ENCODE measurements at regions of chr1 and their contacts with region 1.

Region 1: DNA sequence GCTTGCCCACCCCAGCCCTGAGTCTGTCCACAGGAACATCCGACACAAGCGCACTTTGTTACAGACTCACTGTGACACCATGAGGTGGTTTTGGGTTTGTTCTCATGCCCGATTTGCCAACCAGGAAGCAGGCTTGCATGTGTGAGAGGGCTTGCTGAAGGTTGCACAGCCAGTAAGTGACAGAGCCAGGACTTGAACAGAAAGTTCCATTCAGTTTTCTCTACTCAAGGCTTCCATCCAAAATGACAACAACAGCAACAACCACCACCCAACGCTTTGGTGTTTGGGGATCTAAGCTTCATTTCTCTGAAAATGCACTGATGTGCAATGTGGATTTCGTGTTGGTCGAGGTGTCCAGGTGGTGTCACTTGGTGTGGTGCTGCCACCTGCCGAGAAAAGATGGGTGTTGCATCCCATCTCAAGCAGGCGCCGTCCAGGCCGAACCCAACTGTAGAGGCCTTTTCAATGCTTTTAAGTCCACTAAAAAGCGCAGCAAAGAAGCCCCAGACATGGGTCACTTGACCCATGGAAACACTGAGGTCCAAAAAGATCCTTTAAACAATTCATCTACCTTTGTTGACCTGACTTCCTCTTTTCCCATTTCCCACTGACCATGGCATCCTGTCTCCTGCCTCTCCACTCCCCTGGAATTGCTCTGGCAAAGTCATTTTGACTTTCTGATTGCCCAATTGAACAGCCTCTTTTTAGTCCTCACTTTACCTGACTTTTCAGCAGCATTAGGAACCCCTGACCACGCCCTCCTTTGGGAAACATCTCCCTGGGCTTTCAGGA is 12.2 kb downstream of the CITED4 start:
- DNase-seq: peak; percentile 63 to 87 (median 77)
- ATAC-seq: peak; percentile 98
- H3K4me3 ChIP-seq: no peak overlapping the region
- H3K4me3 Mint-ChIP-seq: peak overlapping the region; percentile 12 to 73 (median 60)
- H3K27ac ChIP-seq: no peak overlapping the region
- H3K27ac Mint-ChIP-seq: peak overlapping the region in 6 of 9 donors; percentile 54 to 78 (median 72)
- H3K4me1 ChIP-seq: peaks cover 0 to under 1% of the 10 kb centered on the region in 2 donors
- H3K4me1 Mint-ChIP-seq: peaks cover 0 to 34% (median 23%) of the 10 kb centered on the region in 7 donors
- H3K27me3 ChIP-seq: no peaks in the 10 kb centered on the region
- H3K27me3 Mint-ChIP-seq: no peaks in the 10 kb centered on the region

Region 2: GRCh38 chr1:40143891-40144575 is 706.0 kb before region 1 on chr1:
- CTCF ChIA-PET with region 1: no interaction called
- POLR2A ChIA-PET with region 1: no interaction called
- intact Hi-C with region 1: loop called in 1 of 2 experiments (anchors 1 kb)
- DNase-seq: peak; percentile 19 to 72 (median 57)
- ATAC-seq: peak; percentile 84
- H3K4me3 ChIP-seq: no peak overlapping the region
- H3K4me3 Mint-ChIP-seq: no peak overlapping the region
- H3K27ac ChIP-seq: no peak overlapping the region
- H3K27ac Mint-ChIP-seq: peak overlapping the region in 1 of 9 donors; percentile 5
- H3K4me1 ChIP-seq: no peaks in the 10 kb centered on the region
- H3K4me1 Mint-ChIP-seq: peaks cover 0 to 12% (median 0%) of the 10 kb centered on the region in 7 donors
- H3K27me3 ChIP-seq: no peaks in the 10 kb centered on the region
- H3K27me3 Mint-ChIP-seq: peaks cover 5 to 61% (median 17%) of the 10 kb centered on the region in 5 donors

Region 3: DNA sequence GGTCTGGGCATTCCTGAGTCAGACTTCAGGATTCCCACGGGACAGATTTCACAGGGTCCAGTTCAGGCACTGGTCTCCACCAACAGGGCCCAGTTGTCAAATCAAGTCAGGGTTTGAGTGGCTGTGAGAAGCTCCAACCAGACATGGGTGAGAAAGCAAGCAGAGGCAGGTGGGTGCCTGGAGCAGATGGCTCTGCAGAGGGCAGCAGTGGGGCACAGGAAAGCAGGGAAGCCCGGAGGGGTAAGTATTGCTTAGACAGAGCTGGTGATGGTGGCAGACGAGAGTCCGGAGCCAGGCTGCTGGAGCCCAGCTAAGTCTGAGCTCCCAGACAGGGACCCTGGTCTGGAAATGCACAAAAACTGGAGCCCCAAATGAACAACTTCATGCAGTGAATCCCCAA is 224.9 kb before region 1 on chr1:
- CTCF ChIA-PET with region 1: interaction called, 4 read pairs
- POLR2A ChIA-PET with region 1: no interaction called
- intact Hi-C with region 1: loop called in 1 of 2 experiments (anchors 5 kb)
- DNase-seq: peak in 3 of 9 donors; percentile 10 to 27 (median 18)
- ATAC-seq: peak; percentile 53
- H3K4me3 ChIP-seq: no peak overlapping the region
- H3K4me3 Mint-ChIP-seq: no peak overlapping the region
- H3K27ac ChIP-seq: no peak overlapping the region
- H3K27ac Mint-ChIP-seq: no peak overlapping the region
- H3K4me1 ChIP-seq: peaks cover 0 to 14% of the 10 kb centered on the region in 2 donors
- H3K4me1 Mint-ChIP-seq: peaks cover 0 to 20% (median 9%) of the 10 kb centered on the region in 7 donors
- H3K27me3 ChIP-seq: no peaks in the 10 kb centered on the region
- H3K27me3 Mint-ChIP-seq: peaks cover 0 to 4% (median 3%) of the 10 kb centered on the region in 5 donors

Region 4: GRCh38 chr1:40668769-40669525 is 181.1 kb before region 1 on chr1:
- CTCF ChIA-PET with region 1: no interaction called
- POLR2A ChIA-PET with region 1: no interaction called
- intact Hi-C with region 1: loop called (anchors 2 to 5 kb)
- DNase-seq: peak; percentile 58 to 84 (median 73)
- ATAC-seq: peak; percentile 82
- H3K4me3 ChIP-seq: peak overlapping the region; percentile 35
- H3K4me3 Mint-ChIP-seq: peak overlapping the region in 8 of 10 donors; percentile 36 to 68 (median 54)
- H3K27ac ChIP-seq: no peak overlapping the region
- H3K27ac Mint-ChIP-seq: no peak overlapping the region
- H3K4me1 ChIP-seq: peaks cover 9 to 13% of the 10 kb centered on the region in 2 donors
- H3K4me1 Mint-ChIP-seq: peaks cover 8 to 22% (median 17%) of the 10 kb centered on the region in 7 donors
- H3K27me3 ChIP-seq: no peaks in the 10 kb centered on the region
- H3K27me3 Mint-ChIP-seq: peaks cover 0 to 16% (median 0%) of the 10 kb centered on the region in 5 donors

Region 5: GRCh38 chr1:40802078-40802741 is 47.8 kb before region 1 on chr1:
- CTCF ChIA-PET with region 1: interaction called, 3 read pairs
- POLR2A ChIA-PET with region 1: no interaction called
- intact Hi-C with region 1: loop called in 1 of 2 experiments (anchors 2 kb)
- DNase-seq: peak; percentile 76 to 87 (median 84)
- ATAC-seq: peak; percentile 98
- H3K4me3 ChIP-seq: peak overlapping the region; percentile 65
- H3K4me3 Mint-ChIP-seq: peak overlapping the region; percentile 70 to 89 (median 78)
- H3K27ac ChIP-seq: peak overlapping the region; percentile 77
- H3K27ac Mint-ChIP-seq: peak overlapping the region; percentile 69 to 92 (median 87)
- H3K4me1 ChIP-seq: peaks cover 16 to 21% of the 10 kb centered on the region in 2 donors
- H3K4me1 Mint-ChIP-seq: peaks cover 15 to 41% (median 31%) of the 10 kb centered on the region in 7 donors
- H3K27me3 ChIP-seq: no peaks in the 10 kb centered on the region
- H3K27me3 Mint-ChIP-seq: peaks cover 0 to 2% (median 0%) of the 10 kb centered on the region in 5 donors

Region 6: DNA sequence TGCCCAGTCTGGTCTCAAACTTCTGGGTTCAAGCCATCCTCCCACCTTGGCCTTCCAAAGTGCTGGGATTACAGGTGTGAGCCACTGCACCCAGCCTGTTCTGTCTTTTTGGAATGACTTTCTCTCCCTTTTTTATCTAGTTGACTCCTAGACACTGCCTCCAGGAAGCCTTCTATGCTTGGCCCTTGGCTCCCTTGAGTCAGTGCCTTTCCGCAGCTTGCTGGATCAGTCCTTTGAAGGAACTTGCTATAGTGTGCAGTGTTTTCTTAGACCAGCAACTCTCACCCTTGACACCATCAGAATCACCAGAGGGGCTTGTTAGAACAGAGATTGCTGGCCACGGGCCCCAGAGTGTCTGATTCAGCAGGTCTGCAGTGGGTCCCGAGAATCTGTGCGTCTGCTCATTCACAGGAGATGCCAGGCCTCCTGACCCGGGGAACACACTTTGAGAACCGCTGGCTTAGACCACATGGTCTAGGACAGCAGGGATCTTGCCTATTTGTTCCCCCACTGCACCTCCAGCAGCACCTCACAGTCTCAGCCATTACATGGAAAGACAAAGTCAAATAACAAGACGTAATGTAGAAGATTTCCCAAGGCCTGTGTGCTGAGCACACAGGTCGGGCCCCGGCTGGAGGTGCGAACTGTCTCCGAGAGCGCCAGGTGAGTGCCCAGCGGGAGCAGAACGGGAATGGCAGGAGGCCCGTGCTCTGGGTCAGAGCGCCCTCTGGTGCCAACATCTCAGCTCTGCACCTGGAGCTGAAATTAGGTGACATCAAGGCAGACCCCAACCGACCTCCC is 102.1 kb after region 1 on chr1:
- CTCF ChIA-PET with region 1: no interaction called
- POLR2A ChIA-PET with region 1: no interaction called
- intact Hi-C with region 1: loop called (anchors 1 kb)
- DNase-seq: peak; percentile 24 to 67 (median 39)
- ATAC-seq: peak; percentile 71
- H3K4me3 ChIP-seq: no peak overlapping the region
- H3K4me3 Mint-ChIP-seq: peak overlapping the region in 4 of 10 donors; percentile 18 to 49 (median 28)
- H3K27ac ChIP-seq: no peak overlapping the region
- H3K27ac Mint-ChIP-seq: no peak overlapping the region
- H3K4me1 ChIP-seq: peaks cover 0 to 3% of the 10 kb centered on the region in 2 donors
- H3K4me1 Mint-ChIP-seq: peaks cover 5 to 19% (median 8%) of the 10 kb centered on the region in 7 donors
- H3K27me3 ChIP-seq: no peaks in the 10 kb centered on the region
- H3K27me3 Mint-ChIP-seq: peaks cover 9 to 34% (median 29%) of the 10 kb centered on the region in 5 donors